HEK293 (cell line): ENCODE measurements at regions of chr20 and their contacts with region 1.

Region 1: GRCh38 chr20:16801919-16802911 is 54.1 kb downstream of the OTOR start:
- H3K4me3 ChIP-seq: no peak overlapping the region
- H3K27ac ChIP-seq: no peak overlapping the region
- H3K4me1 ChIP-seq: no peaks in the 10 kb centered on the region
- CTCF ChIP-seq: no peak

Region 2: GRCh38 chr20:17281478-17281877 is 479.3 kb after region 1 on chr20:
- CTCF ChIA-PET with region 1: interaction called, 10 read pairs
- POLR2A ChIA-PET with region 1: no interaction called
- H3K4me3 ChIP-seq: no peak overlapping the region
- H3K27ac ChIP-seq: no peak overlapping the region
- H3K4me1 ChIP-seq: no peaks in the 10 kb centered on the region
- CTCF ChIP-seq: no peak